ENCODE measurements at regions of chr20 and their contacts with region 1.

Region 1: DNA sequence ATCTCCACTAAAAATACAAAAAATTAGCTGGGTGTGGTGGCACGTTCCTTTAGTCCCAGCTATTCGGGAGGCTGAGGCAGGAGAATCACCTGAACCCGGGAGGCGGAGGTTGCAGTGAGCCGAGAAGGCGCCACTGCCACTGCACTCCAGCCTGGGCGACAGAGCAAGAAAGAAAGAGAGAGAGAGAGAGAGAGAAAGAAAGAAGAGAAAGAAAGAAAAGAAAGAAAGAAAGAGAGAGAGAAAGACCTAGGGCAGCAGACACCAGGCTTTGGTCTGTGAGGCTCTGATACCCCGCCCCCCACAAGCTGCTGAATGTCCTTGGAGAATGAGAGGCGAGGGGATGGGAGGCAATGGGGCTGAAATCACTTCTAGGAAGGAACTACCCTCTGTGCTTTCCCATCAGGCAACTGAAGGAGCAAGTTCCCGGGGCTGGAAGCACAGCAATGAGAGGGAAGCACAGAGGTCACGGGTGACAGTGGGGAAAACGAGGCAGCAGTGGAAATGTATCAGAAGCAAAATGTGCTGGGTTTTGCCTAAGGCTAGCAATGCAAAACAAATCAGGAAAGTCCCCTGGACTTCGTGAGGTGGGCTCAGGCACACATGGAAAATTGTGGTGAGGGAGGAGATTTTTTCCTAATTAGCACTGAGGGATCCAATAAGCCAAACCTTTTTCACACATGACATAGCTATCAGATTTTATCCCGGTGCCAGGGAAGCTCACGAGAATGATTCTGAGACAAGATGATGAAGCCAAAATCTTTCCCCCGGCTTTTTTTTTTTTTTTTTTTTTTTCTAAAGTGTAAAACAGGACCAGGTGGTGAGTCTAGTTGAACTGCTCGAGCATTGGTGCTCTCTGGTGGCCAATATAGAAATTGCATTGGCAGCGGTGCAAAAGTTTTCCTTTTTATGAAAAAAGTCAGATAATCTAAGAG is 16.9 kb upstream of the ARFGEF2 start:
- DNase-seq: no peak
- ATAC-seq: peak; percentile 31

Region 2: DNA sequence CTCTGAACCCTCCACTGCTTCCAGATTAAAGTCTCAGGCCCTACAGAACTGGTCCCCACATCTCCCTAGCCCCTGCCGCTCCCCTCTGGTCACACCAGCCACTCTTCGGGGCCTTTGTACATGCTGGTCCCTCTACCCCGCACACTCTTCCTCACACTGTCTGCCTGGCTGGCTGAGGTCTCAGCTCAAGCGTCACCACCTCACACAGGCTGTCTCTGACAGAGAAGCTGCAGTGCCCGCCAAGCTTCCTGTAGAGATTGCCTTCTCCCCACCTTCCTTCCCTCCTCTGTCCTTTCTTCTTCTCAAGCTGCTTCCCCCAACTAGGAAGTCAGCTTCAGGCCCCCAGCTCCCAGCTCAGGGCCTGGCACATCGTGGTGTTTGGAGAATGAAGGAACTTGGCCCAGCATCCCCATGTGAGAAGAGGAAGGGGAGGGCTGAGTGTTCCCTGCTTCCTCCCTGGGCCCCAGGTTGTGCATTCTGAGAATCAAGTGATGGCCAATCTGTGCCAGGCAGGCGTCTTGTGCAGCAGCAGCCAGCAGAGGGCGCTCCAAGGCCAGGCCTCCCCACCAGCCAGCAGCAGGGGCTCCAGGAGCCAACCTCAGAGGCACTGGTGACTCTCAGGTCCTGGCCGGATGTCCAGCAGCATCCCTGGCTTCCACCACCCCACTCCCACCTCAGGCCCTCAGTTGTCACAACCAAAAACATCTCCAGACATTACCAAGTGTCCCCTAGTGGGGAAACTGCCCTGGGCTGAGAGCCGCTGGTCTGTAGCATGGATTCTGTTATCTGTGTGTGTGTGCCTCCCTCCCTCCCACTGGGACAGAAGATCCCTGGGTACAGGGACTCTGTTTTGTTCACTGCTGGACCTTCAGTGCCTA is 269.0 kb before region 1 on chr20:
- intact Hi-C with region 1: loop called (anchors 1 kb)
- DNase-seq: peak; percentile 83
- ATAC-seq: peak; percentile 57

Region 3: GRCh38 chr20:48657475-48658470 is 246.9 kb before region 1 on chr20:
- intact Hi-C with region 1: loop called (anchors 1 kb)
- DNase-seq: peak; percentile 75
- ATAC-seq: peak; percentile 86

Region 4: GRCh38 chr20:48892844-48893243 is 11.8 kb before region 1 on chr20:
- intact Hi-C with region 1: no loop called
- DNase-seq: no peak
- ATAC-seq: no peak

Region 5: DNA sequence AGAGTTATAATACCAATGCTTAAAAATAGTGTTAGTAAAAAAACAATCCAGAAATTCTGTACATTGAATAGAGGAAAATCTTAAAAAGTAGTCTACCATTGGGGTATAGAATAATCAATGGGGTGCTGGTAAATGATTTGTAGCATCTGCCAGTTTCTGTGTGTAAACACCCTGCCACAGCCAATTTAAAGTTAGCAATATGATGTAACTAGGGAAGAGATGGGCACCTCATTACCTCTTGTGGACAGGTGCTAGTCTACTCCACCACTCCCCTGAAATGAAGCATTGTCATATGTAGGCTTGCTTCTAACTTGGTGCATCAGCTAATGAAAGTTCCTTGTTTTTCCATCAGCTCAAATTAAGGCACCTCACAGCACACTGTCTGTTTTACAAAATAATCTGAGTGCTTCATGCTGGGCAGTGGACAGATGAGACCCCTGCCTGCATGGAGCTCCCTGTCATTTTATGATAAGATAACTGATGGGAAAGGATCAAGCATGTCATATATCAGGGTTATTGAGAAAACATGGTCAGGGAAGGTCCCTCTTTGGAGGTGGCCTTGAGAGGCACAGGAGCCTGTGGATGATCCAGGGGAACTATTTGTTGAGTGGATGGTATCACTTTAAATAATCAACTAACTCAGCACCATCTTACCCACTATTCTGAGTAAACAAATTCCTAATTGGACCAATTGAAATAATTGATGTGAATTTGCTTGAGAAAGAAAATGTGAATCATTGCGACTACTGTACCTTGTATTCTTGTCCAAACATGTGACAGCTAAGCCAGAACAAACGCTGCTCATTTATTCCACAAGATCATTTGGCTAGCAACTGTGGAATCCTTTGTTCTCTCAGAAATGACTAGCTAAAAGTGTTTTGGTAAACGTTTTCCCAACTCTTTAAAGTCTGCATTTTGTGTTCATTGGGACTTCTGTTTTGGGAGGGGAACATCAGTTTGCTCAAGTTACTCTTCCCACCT is 95.5 kb after region 1 on chr20:
- intact Hi-C with region 1: no loop called
- DNase-seq: no peak
- ATAC-seq: no peak